Breast epithelium (tissue), 4 donors: ENCODE measurements at regions of chr12 and their contacts with region 1.

Region 1: DNA sequence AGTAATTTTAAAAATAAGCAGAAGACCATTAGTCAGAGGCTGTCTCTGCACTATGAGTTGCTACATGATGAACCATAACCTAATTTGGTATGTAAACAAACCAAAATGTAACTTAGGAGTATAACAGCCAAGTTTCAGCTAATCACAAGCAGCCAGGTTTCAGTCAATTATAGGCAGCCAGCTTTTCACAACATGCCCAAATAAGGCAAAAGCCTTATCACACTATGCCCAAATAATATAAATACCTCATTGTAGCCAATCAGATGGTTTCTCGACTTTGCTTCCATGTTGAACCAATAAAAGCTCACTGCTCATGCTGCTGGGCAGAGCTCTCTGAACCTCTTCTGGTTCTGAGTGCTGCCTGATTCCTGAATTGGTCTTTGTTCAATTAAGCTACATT is 38.6 kb downstream of the GARIN6 start:
- DNase-seq: no peak
- H3K4me3 ChIP-seq: no peak overlapping the region
- H3K27ac ChIP-seq: no peak overlapping the region
- H3K4me1 ChIP-seq: no peaks in the 10 kb centered on the region
- H3K27me3 ChIP-seq: no peaks in the 10 kb centered on the region
- CTCF ChIP-seq: no peak
- POLR2A ChIP-seq: no peak

Region 2: GRCh38 chr12:99644629-99645028 is 41.5 kb before region 1 on chr12:
- intact Hi-C with region 1: loop called (anchors 2 kb)
- DNase-seq: no peak
- H3K4me3 ChIP-seq: no peak overlapping the region
- H3K27ac ChIP-seq: no peak overlapping the region
- H3K4me1 ChIP-seq: no peaks in the 10 kb centered on the region
- H3K27me3 ChIP-seq: no peaks in the 10 kb centered on the region
- CTCF ChIP-seq: no peak
- POLR2A ChIP-seq: no peak